ENCODE measurements at regions of chr4 and their contacts with region 1.

Region 1: DNA sequence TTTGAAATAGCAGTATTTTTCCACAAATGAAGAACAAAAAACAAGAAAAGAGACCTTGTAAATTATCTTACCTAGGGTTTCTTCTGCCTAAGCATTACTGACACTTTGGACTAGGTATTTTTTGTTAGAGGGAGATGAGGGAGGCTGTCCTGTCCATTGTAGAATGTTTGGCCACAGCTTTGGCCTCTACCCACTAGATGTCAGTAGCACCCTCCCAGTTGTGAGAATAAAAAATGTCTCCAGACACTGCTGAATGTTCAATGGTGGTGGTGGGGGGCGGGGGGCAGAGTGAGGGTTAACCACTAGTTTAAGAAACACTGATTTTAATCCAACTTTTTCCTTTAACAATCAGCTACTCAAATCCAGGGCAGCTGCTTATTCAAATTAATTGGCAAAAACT is 25.8 kb downstream of the OTUD4 start:
- DNase-seq: no peak
- ATAC-seq: peak; percentile 81 to 91 (median 84)
- H3K4me3 ChIP-seq: no peak overlapping the region
- H3K27ac ChIP-seq: peak overlapping the region; percentile 63
- H3K4me1 ChIP-seq: peaks cover 19% of the 10 kb centered on the region
- H3K27me3 ChIP-seq: no peaks in the 10 kb centered on the region
- CTCF ChIP-seq: peak; percentile 57

Region 2: GRCh38 chr4:145525291-145525740 is 370.7 kb after region 1 on chr4:
- intact Hi-C with region 1: no loop called
- DNase-seq: no peak
- ATAC-seq: no peak
- H3K4me3 ChIP-seq: no peak overlapping the region
- H3K27ac ChIP-seq: peak overlapping the region; percentile 21
- H3K4me1 ChIP-seq: peaks cover 28% of the 10 kb centered on the region
- H3K27me3 ChIP-seq: no peaks in the 10 kb centered on the region
- CTCF ChIP-seq: no peak

Region 3: DNA sequence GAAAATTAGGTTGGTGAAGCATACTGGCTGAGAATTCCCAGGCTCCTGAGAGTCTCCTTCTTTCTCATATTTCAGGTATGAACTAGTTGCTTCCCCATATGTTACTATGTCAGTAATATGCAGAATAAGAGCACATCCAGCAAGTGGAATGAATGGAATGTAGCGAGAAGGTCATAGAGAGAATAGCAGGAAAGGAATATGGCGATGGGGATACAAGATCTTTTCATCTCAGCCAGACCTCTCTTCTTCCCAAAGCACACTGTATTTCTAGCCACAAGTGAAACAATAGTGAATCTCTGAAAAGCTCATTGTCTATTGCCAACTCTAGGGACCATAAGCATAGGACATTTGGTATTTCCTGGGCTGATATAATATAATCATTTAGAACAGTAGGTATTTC is 410.0 kb after region 1 on chr4:
- intact Hi-C with region 1: loop called in 1 of 2 experiments (anchors 5 kb)
- DNase-seq: no peak
- ATAC-seq: no peak
- H3K4me3 ChIP-seq: no peak overlapping the region
- H3K27ac ChIP-seq: no peak overlapping the region
- H3K4me1 ChIP-seq: no peaks in the 10 kb centered on the region
- H3K27me3 ChIP-seq: no peaks in the 10 kb centered on the region
- CTCF ChIP-seq: no peak

Region 4: GRCh38 chr4:145609481-145610427 is 455.2 kb after region 1 on chr4:
- intact Hi-C with region 1: loop called in 1 of 2 experiments (anchors 5 kb)
- DNase-seq: peak in 1 of 2 donors; percentile 24
- ATAC-seq: peak; percentile 52 to 78 (median 66)
- H3K4me3 ChIP-seq: no peak overlapping the region
- H3K27ac ChIP-seq: no peak overlapping the region
- H3K4me1 ChIP-seq: no peaks in the 10 kb centered on the region
- H3K27me3 ChIP-seq: no peaks in the 10 kb centered on the region
- CTCF ChIP-seq: peak; percentile 78

Measured in psoas muscle (tissue), 8 donors.